MCF 10A (cell line): ENCODE measurements at regions of chr3 and their contacts with region 1.

Region 1: DNA sequence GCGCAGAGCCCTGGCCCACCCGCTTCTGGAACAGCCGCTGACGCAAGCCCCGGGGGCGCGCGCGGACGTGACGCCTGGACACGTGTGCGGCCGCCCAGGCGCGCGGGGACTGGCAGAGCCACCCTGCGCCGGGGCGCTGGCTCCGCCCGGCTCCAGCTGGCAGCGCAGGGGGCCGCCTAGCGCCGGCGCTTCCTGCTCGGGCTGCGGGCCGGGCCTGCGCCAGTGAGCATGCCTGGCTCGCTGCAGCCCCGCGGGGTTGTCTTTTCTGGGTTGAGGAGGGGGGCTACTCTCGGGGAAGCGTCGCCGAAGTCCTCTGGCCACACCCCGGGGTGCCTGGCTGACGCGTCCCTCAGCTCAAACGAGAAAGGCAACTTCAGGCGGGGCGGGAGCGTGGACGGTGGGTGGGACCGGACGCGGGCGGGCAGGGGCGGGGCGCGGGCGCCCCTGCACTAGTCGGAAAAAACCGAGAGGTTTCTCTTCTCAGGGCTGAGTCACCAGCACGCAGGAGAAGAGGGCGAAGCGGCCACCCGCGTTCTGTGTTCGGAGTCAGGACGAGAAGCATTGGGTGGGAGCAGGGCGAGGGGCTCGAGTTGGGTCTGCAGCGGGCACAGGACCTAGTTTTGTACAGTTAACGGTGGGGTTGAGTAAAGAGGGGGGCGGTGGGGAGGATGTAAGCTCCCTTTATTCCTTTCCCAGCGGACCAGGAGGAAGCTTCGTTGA is at the start of gene SIAH2:
- DNase-seq: peak; percentile 93
- H3K4me3 Mint-ChIP-seq: peak within 1 kb of the TSS; percentile 91
- H3K27ac Mint-ChIP-seq: peak within 1 kb of the TSS; percentile 97
- H3K4me1 Mint-ChIP-seq: peaks cover 29% of the 10 kb centered on the region
- H3K27me3 Mint-ChIP-seq: no peaks in the 10 kb centered on the region
- CTCF ChIP-seq: no peak
- total RNA-seq, gene SIAH2: 20.0 and 35.4 TPM in 2 replicates

Region 2: GRCh38 chr3:150546226-150547044 is 216.8 kb before region 1 on chr3 and contains the starts of genes EIF2A and SERP1:
- CTCF ChIA-PET with region 1: interaction called, 6 read pairs
- POLR2A ChIA-PET with region 1: interaction called, 41 read pairs
- intact Hi-C with region 1: loop called (anchors 5 kb)
- DNase-seq: peak; percentile 99
- H3K4me3 Mint-ChIP-seq: peak within 1 kb of the TSS; percentile 83
- H3K27ac Mint-ChIP-seq: peak within 1 kb of the TSS; percentile 99
- H3K4me1 Mint-ChIP-seq: peaks cover 17% of the 10 kb centered on the region
- H3K27me3 Mint-ChIP-seq: no peaks in the 10 kb centered on the region
- CTCF ChIP-seq: no peak
- total RNA-seq, gene EIF2A: 112 and 117 TPM in 2 replicates
- total RNA-seq, gene SERP1: 227 and 308 TPM in 2 replicates

Region 3: GRCh38 chr3:150721285-150722130 is 41.8 kb before region 1 on chr3:
- CTCF ChIA-PET with region 1: interaction called, 59 read pairs
- POLR2A ChIA-PET with region 1: interaction called, 70 read pairs
- intact Hi-C with region 1: loop called (anchors 1 kb)
- DNase-seq: peak; percentile 65
- H3K4me3 Mint-ChIP-seq: no peak overlapping the region
- H3K27ac Mint-ChIP-seq: no peak overlapping the region
- H3K4me1 Mint-ChIP-seq: peaks cover 16% of the 10 kb centered on the region
- H3K27me3 Mint-ChIP-seq: no peaks in the 10 kb centered on the region
- CTCF ChIP-seq: peak; percentile 77

Region 4: GRCh38 chr3:150737874-150738713 is 25.2 kb before region 1 on chr3:
- CTCF ChIA-PET with region 1: interaction called, 9 read pairs
- POLR2A ChIA-PET with region 1: interaction called, 60 read pairs
- intact Hi-C with region 1: no loop called
- DNase-seq: peak; percentile 68
- H3K4me3 Mint-ChIP-seq: no peak overlapping the region
- H3K27ac Mint-ChIP-seq: no peak overlapping the region
- H3K4me1 Mint-ChIP-seq: peaks cover 37% of the 10 kb centered on the region
- H3K27me3 Mint-ChIP-seq: no peaks in the 10 kb centered on the region
- CTCF ChIP-seq: no peak

Region 5: DNA sequence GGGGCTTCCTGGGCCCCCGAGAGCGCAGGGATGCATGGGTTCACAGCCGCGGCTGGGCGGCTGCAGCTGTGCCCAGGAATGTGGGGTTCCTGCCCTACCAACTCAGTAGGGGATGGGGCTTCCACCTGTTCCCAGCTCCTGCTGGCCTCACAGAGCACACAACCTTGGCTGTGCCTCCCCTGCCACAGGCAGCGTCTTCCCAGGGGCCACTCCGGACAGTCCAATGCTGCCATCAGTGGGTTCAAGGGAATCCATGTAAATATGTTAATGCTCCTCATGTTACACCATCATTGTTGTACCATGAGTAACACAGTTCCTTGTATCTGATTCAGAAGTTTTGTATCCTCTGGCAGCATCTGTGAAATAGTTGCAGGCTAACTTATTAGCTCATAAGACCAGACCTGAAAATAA is 11.8 kb after region 1 on chr3:
- CTCF ChIA-PET with region 1: interaction called, 14 read pairs
- POLR2A ChIA-PET with region 1: interaction called, 12 read pairs
- intact Hi-C with region 1: no loop called
- DNase-seq: no peak
- H3K4me3 Mint-ChIP-seq: no peak overlapping the region
- H3K27ac Mint-ChIP-seq: no peak overlapping the region
- H3K4me1 Mint-ChIP-seq: no peaks in the 10 kb centered on the region
- H3K27me3 Mint-ChIP-seq: no peaks in the 10 kb centered on the region
- CTCF ChIP-seq: no peak

Region 6: DNA sequence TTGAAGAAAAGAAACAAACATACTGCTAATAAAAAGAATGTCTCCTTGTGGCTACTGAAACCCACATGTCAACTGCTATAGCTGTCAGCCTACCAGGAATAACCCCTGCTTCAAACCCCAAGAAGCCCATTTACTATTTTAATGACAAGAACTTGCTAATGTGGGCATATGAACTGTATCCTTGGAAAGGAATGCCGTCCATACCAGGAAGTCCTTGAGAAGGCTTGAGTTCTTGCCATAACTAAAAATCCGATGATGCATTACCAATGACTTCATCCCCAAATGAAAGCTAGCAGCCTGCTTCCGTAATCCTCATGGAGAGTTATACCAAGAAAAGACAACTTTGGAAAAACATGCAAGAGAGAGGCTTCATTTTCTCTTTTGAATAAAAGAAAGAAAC is 107.1 kb after region 1 on chr3:
- CTCF ChIA-PET with region 1: interaction called, 19 read pairs
- POLR2A ChIA-PET with region 1: interaction called, 7 read pairs
- intact Hi-C with region 1: loop called (anchors 1 kb)
- DNase-seq: no peak
- H3K4me3 Mint-ChIP-seq: no peak overlapping the region
- H3K27ac Mint-ChIP-seq: no peak overlapping the region
- H3K4me1 Mint-ChIP-seq: peaks cover 2% of the 10 kb centered on the region
- H3K27me3 Mint-ChIP-seq: no peaks in the 10 kb centered on the region
- CTCF ChIP-seq: no peak